GM18951 (cell line): ENCODE measurements at regions of chr20 and their contacts with region 1.

Region 1: GRCh38 chr20:13819885-13820645 is 35.2 kb downstream of the NDUFAF5 start:
- POLR2A ChIP-seq: no peak

Region 2: DNA sequence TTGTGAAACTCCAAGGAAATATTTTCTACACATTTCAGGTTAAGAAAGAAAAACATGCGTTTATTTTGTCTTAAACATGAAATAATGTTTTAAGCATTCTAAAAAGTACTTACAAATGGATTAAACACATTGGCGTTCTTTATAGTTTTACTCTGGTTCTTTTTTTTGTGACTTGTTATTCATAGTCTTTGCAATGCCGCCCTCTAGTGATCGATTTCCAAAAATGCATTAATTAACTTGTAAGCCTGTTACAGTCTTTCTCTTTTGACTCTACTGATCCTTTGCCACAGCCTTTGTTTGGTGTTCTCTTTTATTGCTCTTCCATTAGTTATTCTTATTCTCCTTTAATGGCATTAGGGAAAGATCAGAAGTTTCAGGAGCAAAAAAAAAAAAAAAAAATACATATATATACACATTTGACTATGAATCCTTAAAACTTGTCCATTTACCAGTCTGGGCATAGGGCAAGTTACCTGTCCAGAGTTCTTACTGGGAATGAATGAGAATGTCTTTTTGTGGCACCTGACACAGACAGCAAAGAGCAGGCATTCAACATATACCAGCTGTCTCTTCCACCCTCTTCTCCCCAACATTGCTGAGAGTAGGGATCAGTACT is 235.2 kb after region 1 on chr20:
- in situ Hi-C with region 1: loop called (anchors 10 kb)
- POLR2A ChIP-seq: no peak